Vagina (tissue), 2 donors: ENCODE measurements at regions of chr12 and their contacts with region 1.

Region 1: GRCh38 chr12:93311827-93312226 is 65.9 kb upstream of the NUDT4 start:
- DNase-seq: no peak
- H3K4me3 ChIP-seq: no peak overlapping the region
- H3K27ac ChIP-seq: no peak overlapping the region
- H3K4me1 ChIP-seq: no peaks in the 10 kb centered on the region
- H3K27me3 ChIP-seq: no peaks in the 10 kb centered on the region
- CTCF ChIP-seq: no peak
- POLR2A ChIP-seq: no peak

Region 2: DNA sequence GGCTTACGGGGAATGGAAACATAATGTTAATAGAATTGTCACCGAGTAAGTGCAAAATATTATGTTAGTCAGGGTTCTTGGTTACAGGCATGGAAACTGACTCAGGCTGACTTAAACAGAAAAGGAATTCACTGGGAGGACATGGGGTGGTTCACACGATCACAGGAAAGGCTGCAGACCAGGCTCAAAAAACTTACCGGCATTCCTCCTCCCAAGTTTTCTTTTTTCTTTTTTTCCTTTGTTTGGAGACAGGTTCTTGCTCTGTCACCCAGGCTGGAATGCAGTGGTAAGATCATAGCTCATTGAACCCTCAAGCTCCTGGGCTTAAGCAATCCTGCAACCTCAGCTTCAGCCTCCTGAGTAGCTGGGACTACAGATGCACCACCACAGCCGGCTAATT is 141.8 kb after region 1 on chr12:
- intact Hi-C with region 1: no loop called
- DNase-seq: no peak
- H3K4me3 ChIP-seq: no peak overlapping the region
- H3K27ac ChIP-seq: no peak overlapping the region
- H3K4me1 ChIP-seq: no peaks in the 10 kb centered on the region
- H3K27me3 ChIP-seq: no peaks in the 10 kb centered on the region
- CTCF ChIP-seq: no peak
- POLR2A ChIP-seq: no peak

Region 3: GRCh38 chr12:94889445-94890210 is 1577.8 kb after region 1 on chr12:
- intact Hi-C with region 1: loop called (anchors 5 kb)
- DNase-seq: no peak
- H3K4me3 ChIP-seq: no peak overlapping the region
- H3K27ac ChIP-seq: no peak overlapping the region
- H3K4me1 ChIP-seq: no peaks in the 10 kb centered on the region
- H3K27me3 ChIP-seq: no peaks in the 10 kb centered on the region
- CTCF ChIP-seq: no peak
- POLR2A ChIP-seq: no peak